ENCODE measurements at regions of chr16 and their contacts with region 1.

Region 1: GRCh38 chr16:89657442-89658220 is at the starts of genes CHMP1A and SPATA33:
- DNase-seq: peak; percentile 28
- ATAC-seq: peak; percentile 96
- H3K4me3 ChIP-seq: peak within 1 kb of the TSS; percentile 92 to 96
- H3K27ac ChIP-seq: peak within 1 kb of the TSS; percentile 93
- H3K4me1 ChIP-seq: no peaks in the 10 kb centered on the region
- H3K27me3 ChIP-seq: no peaks in the 10 kb centered on the region
- CTCF ChIP-seq: no peak
- total RNA-seq, gene CHMP1A: 98.0 TPM
- total RNA-seq, gene SPATA33: 18.3 TPM

Region 2: GRCh38 chr16:89560378-89561141 is 97.1 kb before region 1 on chr16 and contains the start of gene RPL13:
- CTCF ChIA-PET with region 1: interaction called, 10 read pairs
- POLR2A ChIA-PET with region 1: no interaction called
- in situ Hi-C with region 1: no loop called
- intact Hi-C with region 1: no loop called
- DNase-seq: no peak
- ATAC-seq: peak; percentile 83
- H3K4me3 ChIP-seq: peak within 1 kb of the TSS; percentile 76 to 92
- H3K27ac ChIP-seq: peak within 1 kb of the TSS; percentile 93
- H3K4me1 ChIP-seq: peaks cover 21% of the 10 kb centered on the region
- H3K27me3 ChIP-seq: no peaks in the 10 kb centered on the region
- CTCF ChIP-seq: 0 out of 2 replicates have a peak, but pooled peaks have one; percentile 30
- total RNA-seq, gene RPL13: 965 TPM

Region 3: DNA sequence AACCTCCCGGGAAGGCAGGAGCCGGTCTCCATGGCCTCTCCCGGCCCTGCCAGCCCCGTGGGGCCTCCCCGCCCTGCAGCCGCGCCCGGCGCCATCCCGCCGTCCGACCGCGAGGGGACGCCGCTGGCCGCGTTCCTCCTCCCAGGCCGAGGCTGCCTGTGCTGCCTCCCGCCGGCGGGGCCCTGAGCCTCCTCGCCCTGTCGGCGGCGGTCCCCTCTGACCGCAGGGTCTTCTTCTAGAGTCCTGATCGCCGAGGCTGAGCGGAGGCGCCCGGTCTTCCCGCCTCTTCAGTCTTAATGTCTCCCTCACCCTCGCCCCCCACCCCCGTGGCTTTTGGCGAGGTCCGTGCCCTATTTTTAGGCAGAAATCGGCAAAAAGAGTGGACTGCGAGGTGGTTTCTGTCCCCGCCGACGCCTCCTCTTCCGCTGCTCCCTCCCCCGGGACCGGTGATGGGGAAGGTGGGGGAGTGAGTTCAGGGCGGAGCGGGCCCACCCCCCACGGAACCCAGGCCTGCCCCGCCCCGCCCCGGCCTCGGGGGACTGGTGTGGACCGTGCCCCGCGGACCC is 82.9 kb before region 1 on chr16:
- CTCF ChIA-PET with region 1: no interaction called
- POLR2A ChIA-PET with region 1: no interaction called
- in situ Hi-C with region 1: no loop called
- intact Hi-C with region 1: no loop called
- DNase-seq: no peak
- ATAC-seq: peak; percentile 90
- H3K4me3 ChIP-seq: peak overlapping the region; percentile 43 to 64
- H3K27ac ChIP-seq: peak overlapping the region; percentile 71
- H3K4me1 ChIP-seq: no peaks in the 10 kb centered on the region
- H3K27me3 ChIP-seq: no peaks in the 10 kb centered on the region
- CTCF ChIP-seq: peak; percentile 93

Region 4: GRCh38 chr16:89586853-89587252 is 70.8 kb before region 1 on chr16:
- CTCF ChIA-PET with region 1: interaction called, 12 read pairs
- POLR2A ChIA-PET with region 1: interaction called, 19 read pairs
- in situ Hi-C with region 1: no loop called
- intact Hi-C with region 1: no loop called
- DNase-seq: no peak
- ATAC-seq: no peak; the same call in 1 of the 2 replicates
- H3K4me3 ChIP-seq: no peak overlapping the region
- H3K27ac ChIP-seq: 0 out of 2 replicates have a peak overlapping the region, but pooled peaks have one; percentile 12
- H3K4me1 ChIP-seq: peaks cover 8% of the 10 kb centered on the region
- H3K27me3 ChIP-seq: no peaks in the 10 kb centered on the region
- CTCF ChIP-seq: no peak

Region 5: DNA sequence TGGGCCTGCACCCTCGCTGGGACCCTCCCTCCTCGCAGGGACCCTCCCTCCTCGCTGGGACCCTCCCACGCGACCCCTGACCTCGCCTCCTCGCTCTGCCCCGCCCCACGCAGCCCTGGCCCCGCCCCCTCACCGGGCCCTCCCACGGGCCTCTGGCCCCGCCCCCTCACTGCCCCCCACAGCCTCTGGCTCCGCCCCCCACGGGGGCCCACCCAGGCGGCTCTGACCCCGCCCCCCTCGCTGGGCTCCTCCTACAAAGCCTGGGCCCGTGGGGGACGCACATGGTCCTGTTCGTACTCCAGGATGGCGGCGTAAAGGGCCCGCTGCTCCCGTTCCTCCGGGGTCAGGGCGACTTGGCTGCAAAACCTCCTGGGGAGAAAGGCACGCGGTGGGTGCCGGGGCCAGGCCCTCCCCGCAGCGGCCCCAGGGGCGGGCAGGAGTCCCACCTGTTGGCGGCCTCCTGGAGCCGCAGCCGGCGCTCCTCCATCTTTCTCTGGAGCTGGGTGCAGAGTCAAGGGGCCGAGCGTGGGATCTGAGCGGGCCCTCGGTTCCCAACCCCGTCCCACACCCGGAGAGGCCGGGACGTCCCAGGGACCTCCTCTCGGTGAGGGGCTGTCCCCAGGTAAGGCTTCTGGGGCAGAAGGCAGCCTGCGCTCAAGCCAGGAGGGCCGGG is 54.1 kb after region 1 on chr16:
- CTCF ChIA-PET with region 1: no interaction called
- POLR2A ChIA-PET with region 1: no interaction called
- in situ Hi-C with region 1: no loop called
- intact Hi-C with region 1: no loop called
- DNase-seq: no peak
- ATAC-seq: peak; percentile 86
- H3K4me3 ChIP-seq: peak overlapping the region; percentile 56 to 62
- H3K27ac ChIP-seq: peak overlapping the region; percentile 59; the same call in 1 of the 2 replicates
- H3K4me1 ChIP-seq: no peaks in the 10 kb centered on the region
- H3K27me3 ChIP-seq: no peaks in the 10 kb centered on the region
- CTCF ChIP-seq: no peak

Region 6: DNA sequence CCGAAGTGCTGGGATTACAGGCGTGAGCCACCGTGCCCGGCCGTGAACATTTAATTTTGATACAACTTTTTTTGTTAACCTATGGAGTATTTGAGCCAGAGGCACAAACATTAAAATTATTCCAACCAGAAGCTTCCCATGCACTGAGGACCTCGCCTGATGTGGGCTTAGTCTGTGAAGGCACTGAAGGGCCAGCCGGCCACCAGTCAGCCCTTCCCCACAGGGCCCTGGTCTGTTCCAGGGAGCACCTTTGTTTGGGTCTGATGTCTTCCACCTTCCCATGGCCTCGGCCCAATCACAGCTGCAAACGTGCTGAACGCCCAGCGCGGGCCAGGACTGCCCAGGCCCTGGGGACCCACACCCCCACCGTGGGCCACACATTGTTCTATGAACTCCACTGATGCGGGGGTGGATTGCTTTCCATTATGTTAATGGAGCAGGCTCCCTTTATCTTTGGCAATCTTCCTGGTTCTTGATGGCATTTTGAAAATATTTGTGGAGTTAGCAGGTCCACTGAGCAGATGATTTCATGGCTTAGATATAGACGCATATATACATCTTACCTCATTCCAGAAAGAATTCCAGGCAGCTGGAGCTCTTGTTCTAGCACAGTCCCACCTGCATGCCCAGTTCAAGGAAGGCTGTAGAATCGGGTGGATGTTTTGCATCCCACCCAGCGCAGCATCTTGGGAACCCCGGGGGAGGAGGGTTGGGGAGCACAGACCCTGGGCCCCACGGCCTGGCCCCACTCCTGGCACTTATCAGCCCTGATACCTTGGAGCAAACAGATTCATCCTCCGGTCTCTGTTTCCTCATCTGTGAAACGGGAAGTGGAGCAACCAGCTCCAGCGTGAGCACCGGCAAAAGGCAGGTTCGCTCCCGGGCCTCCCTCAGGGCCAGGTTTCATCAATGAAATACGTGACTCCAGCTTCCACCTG is 185.1 kb after region 1 on chr16:
- CTCF ChIA-PET with region 1: no interaction called
- POLR2A ChIA-PET with region 1: no interaction called
- in situ Hi-C with region 1: no loop called
- intact Hi-C with region 1: no loop called
- DNase-seq: no peak
- ATAC-seq: peak; percentile 72
- H3K4me3 ChIP-seq: no peak overlapping the region
- H3K27ac ChIP-seq: no peak overlapping the region
- H3K4me1 ChIP-seq: peaks cover 9% of the 10 kb centered on the region; the same call in 1 of the 2 replicates
- H3K27me3 ChIP-seq: no peaks in the 10 kb centered on the region
- CTCF ChIP-seq: no peak

Region 7: GRCh38 chr16:89953671-89954419 is 296.2 kb after region 1 on chr16:
- CTCF ChIA-PET with region 1: no interaction called
- POLR2A ChIA-PET with region 1: no interaction called
- in situ Hi-C with region 1: no loop called
- intact Hi-C with region 1: no loop called
- DNase-seq: no peak
- ATAC-seq: no peak
- H3K4me3 ChIP-seq: no peak overlapping the region
- H3K27ac ChIP-seq: no peak overlapping the region
- H3K4me1 ChIP-seq: 0 out of 2 replicates have a peak, but pooled peaks cover 4% of the 10 kb centered on the region
- H3K27me3 ChIP-seq: no peaks in the 10 kb centered on the region
- CTCF ChIP-seq: no peak

Measured in Panc1 (cell line).